Common myeloid progenitor, CD34-positive (primary cell): ENCODE measurements at regions of chr1 and their contacts with region 1.

Region 1: GRCh38 chr1:119743781-119744597 is 24.7 kb downstream of the HMGCS2 start:
- DNase-seq: peak; percentile 65 to 79 (median 72)
- H3K4me3 ChIP-seq: no peak overlapping the region
- H3K27ac ChIP-seq: no peak overlapping the region
- H3K4me1 ChIP-seq: no peaks in the 10 kb centered on the region
- H3K27me3 ChIP-seq: no peaks in the 10 kb centered on the region

Region 2: DNA sequence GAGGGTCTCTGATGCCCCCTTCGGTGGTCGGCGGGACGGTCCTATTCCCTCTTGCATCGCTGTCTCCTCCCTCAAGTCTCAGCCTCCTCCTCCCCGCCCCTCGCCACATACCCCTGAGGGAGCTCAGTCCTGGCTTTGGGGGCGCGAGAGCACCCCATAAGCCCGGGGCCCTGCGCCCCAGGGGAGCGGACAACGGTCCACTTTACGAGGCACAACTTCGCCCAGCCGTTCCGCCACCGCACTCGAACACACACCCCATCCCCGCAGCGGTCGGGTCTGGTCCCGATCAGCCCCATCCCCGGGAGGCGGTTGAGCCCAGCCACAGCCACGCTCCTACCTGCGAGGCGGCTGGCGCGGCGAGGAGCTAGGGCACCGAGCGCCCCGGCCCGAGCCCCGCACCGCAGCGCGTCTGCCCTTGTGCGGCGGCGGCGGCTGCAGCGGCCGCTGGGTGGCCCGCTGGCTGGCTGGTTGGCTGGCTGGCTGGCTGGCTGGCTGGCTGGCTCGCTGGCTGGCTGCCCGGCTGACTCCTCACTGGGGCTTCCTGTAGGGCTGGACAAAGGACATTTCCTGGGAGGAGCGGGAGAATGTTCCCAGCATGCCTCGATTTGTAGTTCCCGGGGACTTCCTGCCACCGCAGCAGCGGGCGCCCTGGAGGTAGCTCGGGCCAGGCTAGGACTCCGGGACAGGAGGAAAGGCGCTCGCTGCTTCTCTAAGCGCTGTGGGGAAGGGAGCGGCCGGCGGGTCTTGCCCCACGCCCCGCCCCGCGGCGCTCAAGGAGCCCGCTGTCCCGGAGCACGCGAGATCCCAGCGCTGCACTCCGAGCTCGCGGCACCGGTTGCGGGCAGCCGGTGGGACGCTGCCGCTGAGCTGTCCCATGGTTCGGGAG is 96.0 kb before region 1 on chr1 and contains the start of gene ZNF697:
- CTCF ChIA-PET with region 1: no interaction called
- POLR2A ChIA-PET with region 1: no interaction called
- DNase-seq: peak; percentile 71 to 83 (median 72)
- H3K4me3 ChIP-seq: peak within 1 kb of the TSS; percentile 64 to 88 (median 79)
- H3K27ac ChIP-seq: peak within 1 kb of the TSS in 1 of 2 experiments; percentile 29
- H3K4me1 ChIP-seq: peaks cover 6 to 28% (median 20%) of the 10 kb centered on the region in 4 experiments
- H3K27me3 ChIP-seq: peaks cover 6 to 22% (median 10%) of the 10 kb centered on the region in 5 experiments

Region 3: DNA sequence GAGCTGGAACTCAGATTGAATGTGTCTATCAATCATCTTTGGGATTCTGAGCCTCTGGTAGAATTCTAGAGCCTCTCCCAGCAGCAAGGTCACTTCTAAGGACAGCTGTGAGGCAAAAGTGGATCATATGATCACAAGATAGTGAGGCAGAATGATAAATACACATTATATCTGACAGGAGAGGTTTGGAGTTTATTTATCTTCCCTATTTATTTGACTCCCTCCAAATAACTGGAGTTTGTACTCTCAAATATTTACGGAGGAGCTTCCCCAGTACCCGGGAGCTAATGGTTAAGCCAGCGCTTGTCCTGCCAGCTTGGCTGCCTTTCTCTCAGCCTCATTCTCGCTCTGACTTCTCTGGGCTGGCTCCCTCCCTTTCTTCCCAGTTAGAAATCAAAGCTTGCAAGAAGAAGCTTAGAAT is 22.4 kb after region 1 on chr1:
- CTCF ChIA-PET with region 1: interaction called, 10 read pairs
- POLR2A ChIA-PET with region 1: no interaction called
- DNase-seq: no peak
- H3K4me3 ChIP-seq: no peak overlapping the region
- H3K27ac ChIP-seq: no peak overlapping the region
- H3K4me1 ChIP-seq: no peaks in the 10 kb centered on the region
- H3K27me3 ChIP-seq: peaks cover 0 to 4% (median 0%) of the 10 kb centered on the region in 5 experiments

Region 4: DNA sequence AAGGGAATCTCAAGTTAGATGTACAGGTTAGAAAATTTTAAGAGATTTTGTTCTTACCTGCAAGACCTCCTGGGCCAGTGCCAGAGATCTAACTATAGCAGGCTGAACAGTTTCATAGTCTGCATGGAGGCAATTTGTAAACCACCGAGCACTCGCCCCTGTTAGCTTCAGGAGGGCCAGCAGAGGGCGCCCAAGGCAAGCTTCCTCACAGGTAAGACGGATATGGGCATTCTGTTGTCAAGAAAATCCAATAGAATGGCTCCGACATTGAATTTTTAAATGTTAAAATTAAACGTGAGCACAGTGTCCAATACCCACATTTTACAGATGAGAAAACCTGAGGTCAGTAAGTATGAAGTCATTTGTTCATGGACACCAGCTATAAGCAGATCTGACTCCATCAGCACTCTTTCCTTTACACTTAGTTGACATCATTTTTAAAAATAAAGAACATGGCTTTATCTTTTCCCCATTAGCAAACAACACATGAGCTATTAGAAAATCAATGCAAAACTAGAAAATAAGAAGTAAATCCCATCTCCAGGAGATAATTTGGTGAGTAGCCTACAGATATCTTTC is 65.1 kb after region 1 on chr1:
- CTCF ChIA-PET with region 1: interaction called, 10 read pairs
- POLR2A ChIA-PET with region 1: no interaction called
- DNase-seq: peak; percentile 67 to 83 (median 81)
- H3K4me3 ChIP-seq: peak overlapping the region in 1 of 7 experiments; percentile 35
- H3K27ac ChIP-seq: no peak overlapping the region
- H3K4me1 ChIP-seq: peaks cover 0 to 3% (median 0%) of the 10 kb centered on the region in 4 experiments
- H3K27me3 ChIP-seq: peaks cover 0 to 5% (median 0%) of the 10 kb centered on the region in 5 experiments

Region 5: DNA sequence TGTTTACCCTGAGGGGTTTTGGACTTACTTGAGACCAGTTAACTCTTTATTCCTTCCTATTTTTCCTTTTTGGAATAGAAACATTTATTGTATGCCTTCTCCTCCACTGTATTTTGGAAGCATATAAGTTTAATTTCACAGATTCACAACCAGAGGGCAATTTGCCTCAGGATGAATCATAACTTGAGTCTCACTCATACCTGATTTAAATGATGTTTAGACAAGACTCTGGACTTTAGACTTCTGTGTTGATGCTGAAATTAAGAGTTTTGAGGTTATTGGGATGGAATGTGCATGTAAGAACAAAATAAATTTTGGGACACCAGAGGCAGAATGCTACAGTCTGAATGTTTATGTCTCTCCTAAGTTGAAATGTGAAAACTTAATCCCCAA is 159.4 kb after region 1 on chr1:
- CTCF ChIA-PET with region 1: no interaction called
- POLR2A ChIA-PET with region 1: no interaction called
- DNase-seq: no peak
- H3K4me3 ChIP-seq: no peak overlapping the region
- H3K27ac ChIP-seq: no peak overlapping the region
- H3K4me1 ChIP-seq: no peaks in the 10 kb centered on the region
- H3K27me3 ChIP-seq: no peaks in the 10 kb centered on the region